SK-N-SH (cell line): ENCODE measurements at regions of chr12 and their contacts with region 1.

Region 1: DNA sequence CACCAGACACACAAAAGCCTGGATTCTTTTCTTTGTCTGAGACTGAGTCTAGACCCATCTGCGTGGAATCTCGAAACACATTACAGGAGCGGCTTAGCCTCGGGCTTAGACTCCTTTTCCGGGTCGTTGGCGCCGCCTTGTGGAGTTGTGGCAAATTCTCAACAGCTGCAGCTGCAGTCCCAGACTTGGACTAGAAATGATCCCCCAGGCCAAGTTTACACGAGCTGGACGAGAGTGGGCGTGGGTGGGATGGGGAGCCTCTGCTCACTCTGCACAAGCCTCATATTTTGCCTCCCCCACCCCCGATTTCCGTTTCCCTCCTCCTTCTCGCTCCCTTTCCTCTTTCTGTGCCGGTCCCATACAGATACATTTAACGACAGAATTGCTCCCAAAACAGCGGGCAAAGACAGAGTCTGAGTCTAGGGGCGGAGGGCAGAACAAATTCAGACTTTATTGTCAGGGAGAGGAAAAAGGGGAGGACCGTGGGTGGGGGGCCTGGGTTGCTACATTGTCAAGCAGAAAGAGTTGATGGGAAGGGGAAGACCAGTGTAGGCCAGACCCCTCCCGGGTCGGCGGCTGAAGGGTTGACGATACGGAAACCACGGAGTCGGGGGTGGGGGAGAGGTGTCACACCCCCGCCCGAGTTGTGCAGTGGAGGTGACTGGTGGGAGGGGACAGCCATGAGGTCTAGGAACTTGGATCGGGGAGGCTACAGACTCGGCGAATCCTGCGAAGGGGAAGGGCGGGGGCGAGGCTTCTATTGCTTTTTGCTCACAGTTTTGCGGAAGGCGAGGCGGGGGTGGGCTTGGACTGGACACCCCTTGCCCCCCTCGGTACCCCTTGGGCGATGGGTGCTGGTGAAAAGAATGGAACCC is 4.7 kb upstream of the GPR84 start:
- DNase-seq: peak; percentile 77
- H3K4me3 ChIP-seq: no peak overlapping the region
- H3K27ac ChIP-seq: no peak overlapping the region
- H3K4me1 ChIP-seq: peaks cover 11 to 26% of the 10 kb centered on the region in 2 experiments; a peak in 2 of 4 replicates
- H3K27me3 ChIP-seq: no peaks in the 10 kb centered on the region
- CTCF ChIP-seq: peak; percentile 84
- EP300 ChIP-seq: no peak
- RAD21 ChIP-seq: peak; percentile 90

Region 2: DNA sequence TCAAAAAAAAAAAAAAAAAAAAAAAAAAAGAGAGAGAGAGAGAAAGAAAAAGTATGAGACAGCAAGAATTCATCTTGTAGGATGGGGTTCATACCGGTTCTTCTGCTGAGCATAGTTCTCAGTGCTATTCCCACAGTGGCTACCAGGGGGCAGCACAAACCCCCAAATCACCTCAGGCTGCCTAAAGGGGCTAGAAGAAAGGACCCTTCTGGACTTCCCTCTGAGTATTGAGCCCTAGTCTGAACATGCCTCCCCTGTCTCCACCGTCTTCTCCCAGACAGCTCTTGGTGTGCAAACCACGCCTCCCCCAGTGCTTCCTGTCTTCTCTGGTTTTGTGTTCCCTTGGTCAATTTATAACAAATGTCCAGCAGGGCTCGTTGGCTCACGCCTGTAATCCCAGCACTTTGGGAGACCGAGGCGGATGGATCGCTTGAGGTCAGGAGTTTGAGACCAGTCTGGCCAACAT is 148.8 kb before region 1 on chr12:
- CTCF ChIA-PET with region 1: interaction called, 36 read pairs
- POLR2A ChIA-PET with region 1: no interaction called
- DNase-seq: peak; percentile 75
- H3K4me3 ChIP-seq: no peak overlapping the region; a peak in 1 of 4 replicates
- H3K27ac ChIP-seq: no peak overlapping the region
- H3K4me1 ChIP-seq: peaks cover 3 to 14% of the 10 kb centered on the region in 2 experiments; a peak in 3 of 4 replicates
- H3K27me3 ChIP-seq: no peaks in the 10 kb centered on the region
- CTCF ChIP-seq: peak; percentile 88
- EP300 ChIP-seq: no peak
- RAD21 ChIP-seq: peak; percentile 84

Region 3: DNA sequence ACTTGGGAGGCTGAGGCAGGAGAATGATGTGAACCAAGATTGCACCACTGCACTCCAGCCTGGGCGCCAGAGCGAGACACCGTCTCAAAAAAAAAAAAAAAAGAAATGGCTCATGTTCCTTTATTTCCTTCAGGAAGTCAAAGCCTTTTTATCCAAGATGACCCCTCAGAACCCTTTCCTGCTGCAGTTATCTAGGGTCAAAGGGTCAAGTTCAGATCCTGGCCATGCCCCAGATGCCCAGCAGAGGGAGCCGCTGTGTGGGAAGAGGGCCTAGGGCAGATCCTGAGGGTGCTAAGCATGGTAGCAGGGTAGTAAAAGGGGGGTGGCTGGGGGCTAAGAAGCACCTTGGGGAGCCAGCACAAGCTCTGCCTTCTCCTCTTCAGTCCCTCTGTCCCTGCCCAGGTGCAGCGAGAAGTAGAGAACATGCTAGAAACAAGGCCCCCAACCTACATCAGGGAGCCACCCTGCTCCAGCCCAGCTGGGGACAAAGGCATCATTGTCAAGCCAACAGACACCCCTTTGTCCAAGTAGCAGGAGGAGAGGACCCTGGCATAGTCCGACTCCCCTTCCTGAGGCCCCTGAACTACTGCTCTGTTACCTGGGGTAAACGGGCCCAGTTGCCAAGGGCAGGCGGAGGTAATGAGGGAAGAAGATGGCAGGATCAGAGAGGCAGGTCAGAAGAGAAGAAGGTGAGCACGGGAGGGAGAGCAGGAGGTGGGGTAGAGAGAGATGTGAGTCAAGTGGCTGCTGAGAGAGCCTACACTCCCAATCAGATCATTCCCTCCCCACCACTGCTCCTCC is 74.6 kb before region 1 on chr12:
- CTCF ChIA-PET with region 1: interaction called, 86 read pairs
- POLR2A ChIA-PET with region 1: no interaction called
- DNase-seq: peak; percentile 71
- H3K4me3 ChIP-seq: peak overlapping the region in 1 of 2 experiments; percentile 40; a peak in 1 of 4 replicates
- H3K27ac ChIP-seq: no peak overlapping the region
- H3K4me1 ChIP-seq: peaks cover 0 to 2% of the 10 kb centered on the region in 2 experiments; a peak in 1 of 4 replicates
- H3K27me3 ChIP-seq: no peaks in the 10 kb centered on the region
- CTCF ChIP-seq: peak; percentile 76
- EP300 ChIP-seq: no peak
- RAD21 ChIP-seq: peak; percentile 61

Region 4: GRCh38 chr12:54352022-54352531 is 16.9 kb before region 1 on chr12:
- CTCF ChIA-PET with region 1: interaction called, 56 read pairs
- POLR2A ChIA-PET with region 1: interaction called, 3 read pairs
- DNase-seq: peak; percentile 65
- H3K4me3 ChIP-seq: peak overlapping the region in 1 of 2 experiments; percentile 25; a peak in 2 of 4 replicates
- H3K27ac ChIP-seq: peak overlapping the region; percentile 63 to 99
- H3K4me1 ChIP-seq: peaks cover 25 to 41% of the 10 kb centered on the region in 2 experiments
- H3K27me3 ChIP-seq: no peaks in the 10 kb centered on the region
- CTCF ChIP-seq: no peak
- EP300 ChIP-seq: peak in 1 of 2 experiments; percentile 14; a peak in 1 of 4 replicates
- RAD21 ChIP-seq: no peak

Region 5: DNA sequence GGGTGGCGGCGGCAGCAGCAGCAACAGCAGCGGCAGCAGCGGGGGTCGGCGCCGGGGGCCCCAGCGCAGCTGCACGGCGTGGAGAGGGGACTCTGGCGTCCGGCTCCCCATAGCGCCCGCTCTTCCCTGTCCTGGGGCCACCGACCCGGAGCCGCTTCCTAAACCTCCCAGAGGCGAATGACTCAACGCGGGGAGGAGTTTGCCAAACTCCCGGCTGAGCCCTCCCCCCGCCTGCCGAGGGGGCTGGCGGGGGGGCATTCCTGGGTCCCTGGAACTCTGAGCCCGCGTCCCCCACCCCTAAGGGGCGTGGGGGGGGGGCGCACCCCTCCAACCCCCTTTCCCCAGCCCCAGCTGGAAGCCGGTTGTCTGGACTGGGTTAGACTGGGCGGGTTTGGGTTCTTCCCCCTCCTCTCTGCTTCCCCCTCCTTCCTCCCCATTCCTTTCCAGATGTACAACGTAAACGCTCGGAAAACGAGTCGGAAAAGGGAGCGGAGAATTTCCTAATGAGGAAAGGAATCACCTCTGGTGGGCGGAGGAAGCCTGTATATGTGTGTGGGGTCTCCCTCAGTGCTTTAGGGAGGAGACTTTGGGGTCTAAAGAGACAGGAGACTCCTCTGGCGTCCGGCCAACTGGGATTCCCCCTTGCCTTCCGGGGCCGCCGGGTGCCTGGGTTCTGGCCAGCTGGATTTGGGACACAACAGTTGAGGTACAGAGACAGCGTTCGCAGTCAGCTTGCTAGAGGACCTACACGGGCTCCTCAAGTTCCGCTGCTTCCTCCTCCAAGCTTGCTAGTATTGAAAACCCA is 50.3 kb after region 1 on chr12 and contains the start of gene ITGA5:
- CTCF ChIA-PET with region 1: no interaction called
- POLR2A ChIA-PET with region 1: no interaction called
- DNase-seq: peak; percentile 58
- H3K4me3 ChIP-seq: peak within 1 kb of the TSS; percentile 59 to 96
- H3K27ac ChIP-seq: peak within 1 kb of the TSS in 1 of 2 experiments; percentile 60; a peak in 2 of 4 replicates
- H3K4me1 ChIP-seq: peaks cover 0 to 23% of the 10 kb centered on the region in 2 experiments; a peak in 3 of 4 replicates
- H3K27me3 ChIP-seq: no peaks in the 10 kb centered on the region
- CTCF ChIP-seq: no peak
- EP300 ChIP-seq: no peak
- RAD21 ChIP-seq: no peak
- polyA plus RNA-seq, gene ITGA5: 35.0 and 52.5 TPM in 2 replicates

Region 6: DNA sequence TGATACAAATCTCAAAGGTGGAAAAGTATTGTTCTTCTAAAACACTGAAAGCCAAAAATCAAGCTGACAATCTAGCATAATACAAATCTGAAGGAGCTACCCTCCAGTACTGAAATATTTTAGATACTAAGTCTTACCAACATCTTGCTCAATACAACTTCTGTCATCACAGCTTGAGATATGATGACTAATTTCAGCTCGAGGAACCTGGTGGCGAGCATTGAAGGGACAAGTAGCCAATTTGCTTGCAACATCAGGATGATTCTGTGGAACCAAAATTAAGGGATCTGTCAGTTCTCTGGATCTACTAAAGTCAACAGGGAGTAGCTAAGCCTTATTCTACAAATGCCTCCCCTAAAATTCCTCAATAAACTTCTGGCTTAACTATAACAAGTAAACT is 94.1 kb after region 1 on chr12:
- CTCF ChIA-PET with region 1: no interaction called
- POLR2A ChIA-PET with region 1: no interaction called
- DNase-seq: no peak
- H3K4me3 ChIP-seq: no peak overlapping the region
- H3K27ac ChIP-seq: no peak overlapping the region
- H3K4me1 ChIP-seq: no peaks in the 10 kb centered on the region
- H3K27me3 ChIP-seq: peaks cover 10% of the 10 kb centered on the region; the same call in 1 of the 2 replicates
- CTCF ChIP-seq: no peak
- EP300 ChIP-seq: no peak
- RAD21 ChIP-seq: no peak